Dorsolateral prefrontal cortex (tissue), 120 donors: ENCODE measurements at regions of chr5 and their contacts with region 1.

Region 1: DNA sequence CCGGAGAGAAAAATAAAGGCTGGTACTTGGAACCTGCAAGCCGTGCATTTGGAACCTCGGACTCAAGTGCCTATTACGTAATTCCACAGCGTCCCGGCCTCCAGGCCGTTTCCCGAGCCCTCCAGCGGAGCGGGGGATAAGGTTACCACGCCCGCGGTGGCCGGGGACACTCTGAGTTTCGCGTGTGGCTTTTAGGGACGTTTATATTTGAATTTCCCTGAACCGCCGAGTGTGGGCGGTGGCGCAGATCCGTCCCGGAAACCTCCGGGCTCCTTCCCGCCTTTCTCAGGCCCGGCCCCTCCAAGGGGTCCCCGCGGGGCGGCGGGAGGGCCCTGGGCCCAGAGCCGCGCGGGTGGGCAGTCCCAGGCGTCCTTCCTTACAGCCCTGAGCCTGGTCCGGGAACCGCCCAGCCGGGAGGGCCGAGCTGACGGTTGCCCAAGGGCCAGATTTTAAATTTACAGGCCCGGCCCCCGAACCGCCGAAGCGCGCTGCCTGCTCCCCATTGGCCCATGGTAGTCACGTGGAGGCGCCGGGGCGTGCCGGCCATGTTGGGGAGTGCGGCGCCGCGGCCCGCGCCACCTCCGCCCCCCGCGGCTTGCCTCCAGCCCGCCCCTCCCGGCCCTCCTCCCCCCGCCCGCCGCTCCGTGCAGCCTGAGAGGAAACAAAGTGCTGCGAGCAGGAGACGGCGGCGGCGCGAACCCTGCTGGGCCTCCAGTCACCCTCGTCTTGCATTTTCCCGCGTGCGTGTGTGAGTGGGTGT is at the start of gene LMNB1:
- DNase-seq: peak; percentile 80 to 94 (median 90)
- H3K4me3 ChIP-seq: peak within 1 kb of the TSS; percentile 46 to 96 (median 86)
- H3K27ac ChIP-seq: peak within 1 kb of the TSS; percentile 53 to 96 (median 91)
- H3K27me3 ChIP-seq: no peaks in the 10 kb centered on the region
- CTCF ChIP-seq: peak in 43 of 56 donors; percentile 5 to 61 (median 31)
- total RNA-seq, gene LMNB1: 4.1 to 22.3 (median 8.6) TPM

Region 2: DNA sequence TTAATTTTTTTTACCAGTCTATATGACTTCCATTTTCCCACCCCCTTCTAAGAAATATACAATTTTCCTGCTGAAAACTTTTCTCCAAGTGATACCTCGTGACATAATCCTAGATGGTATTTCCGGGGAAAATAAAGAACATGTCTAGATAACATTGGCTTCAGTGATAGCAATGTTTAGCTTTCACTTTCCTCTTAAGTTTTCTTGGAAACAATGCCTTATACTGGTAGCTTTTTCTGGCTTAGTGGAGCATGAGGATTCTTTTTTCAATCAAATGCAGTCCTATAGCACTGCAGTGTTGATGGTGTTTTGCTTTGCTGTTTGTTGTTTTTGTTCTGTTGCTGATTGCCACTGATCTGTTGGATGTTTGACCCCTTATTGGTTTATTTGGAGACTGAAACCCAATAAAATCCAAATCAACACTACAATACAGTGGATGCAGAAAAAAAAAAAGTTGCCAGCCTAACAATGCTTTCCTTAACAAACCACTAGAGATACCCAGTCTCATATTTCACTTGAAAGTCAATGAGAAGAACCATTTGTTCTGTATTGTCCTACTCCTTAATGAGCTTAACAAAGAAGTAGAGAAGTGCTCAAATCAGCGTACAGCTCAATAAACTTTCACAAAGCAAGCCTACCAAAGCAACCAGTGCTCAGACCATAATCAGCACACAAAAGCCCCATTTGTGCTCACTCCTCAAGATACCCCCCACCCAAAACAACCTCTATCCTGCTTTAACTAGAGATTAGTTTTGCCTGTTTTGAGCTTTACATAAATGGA is 427.6 kb before region 1 on chr5:
- intact Hi-C with region 1: loop called in 1 of 2 experiments (anchors 10 kb)
- DNase-seq: no peak
- H3K4me3 ChIP-seq: no peak overlapping the region
- H3K27ac ChIP-seq: peak overlapping the region in 1 of 59 donors; percentile 13
- H3K27me3 ChIP-seq: no peaks in the 10 kb centered on the region
- CTCF ChIP-seq: no peak

Region 3: GRCh38 chr5:126594676-126595485 is 181.8 kb before region 1 on chr5 and contains the start of gene ALDH7A1:
- intact Hi-C with region 1: loop called (anchors 2 to 5 kb)
- DNase-seq: peak; percentile 73 to 87 (median 84)
- H3K4me3 ChIP-seq: peak within 1 kb of the TSS; percentile 50 to 94 (median 76)
- H3K27ac ChIP-seq: peak within 1 kb of the TSS in 57 of 59 donors; percentile 16 to 93 (median 80)
- H3K27me3 ChIP-seq: no peaks in the 10 kb centered on the region
- CTCF ChIP-seq: peak; percentile 19 to 73 (median 56)
- total RNA-seq, gene ALDH7A1: 54.8 to 188 (median 92.2) TPM

Region 4: GRCh38 chr5:126600631-126601511 is 175.8 kb before region 1 on chr5 and contains the start of gene PHAX:
- intact Hi-C with region 1: loop called (anchors 2 to 5 kb)
- DNase-seq: peak; percentile 57 to 90 (median 72)
- H3K4me3 ChIP-seq: peak within 1 kb of the TSS; percentile 67 to 100 (median 95)
- H3K27ac ChIP-seq: peak within 1 kb of the TSS in 58 of 59 donors; percentile 21 to 95 (median 83)
- H3K27me3 ChIP-seq: no peaks in the 10 kb centered on the region
- CTCF ChIP-seq: peak; percentile 57 to 91 (median 81)
- total RNA-seq, gene PHAX: 32.7 to 78.0 (median 53.0) TPM

Region 5: DNA sequence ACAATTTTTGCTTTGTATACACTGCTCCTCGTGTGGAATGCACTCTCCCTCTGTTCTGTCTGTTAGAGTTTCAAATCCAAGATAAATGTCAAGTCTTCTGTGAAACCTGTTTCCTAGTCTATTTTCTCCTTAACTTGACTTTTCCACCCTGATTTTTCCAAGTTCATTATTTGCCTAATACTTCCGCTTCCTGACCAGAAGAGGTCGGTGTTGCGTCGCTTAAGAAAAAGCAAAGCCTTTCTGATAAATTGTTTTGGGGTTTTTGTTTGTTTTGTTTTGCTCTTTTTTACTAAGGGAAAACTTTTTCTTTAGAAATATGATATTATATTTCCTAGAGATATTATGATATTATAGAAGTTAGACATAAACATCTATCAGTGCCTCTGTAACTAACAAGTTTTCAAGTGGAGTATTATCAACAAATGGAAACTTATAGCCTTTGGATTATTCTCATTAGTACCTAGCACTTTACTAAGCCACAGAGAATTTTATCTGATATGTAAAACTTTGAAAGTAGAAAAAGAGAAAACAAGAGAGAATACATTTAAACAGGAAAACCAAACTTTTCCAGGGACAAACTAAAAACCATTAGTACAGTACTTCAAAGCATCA is 120.2 kb before region 1 on chr5:
- intact Hi-C with region 1: loop called (anchors 1 to 5 kb)
- DNase-seq: peak in 1 of 10 donors; percentile 8
- H3K4me3 ChIP-seq: no peak overlapping the region
- H3K27ac ChIP-seq: no peak overlapping the region
- H3K27me3 ChIP-seq: no peaks in the 10 kb centered on the region
- CTCF ChIP-seq: peak; percentile 61 to 91 (median 80)

Region 6: GRCh38 chr5:126676195-126676624 is 100.5 kb before region 1 on chr5:
- intact Hi-C with region 1: loop called (anchors 1 to 5 kb)
- DNase-seq: peak in 5 of 10 donors; percentile 27 to 65 (median 50)
- H3K4me3 ChIP-seq: no peak overlapping the region
- H3K27ac ChIP-seq: no peak overlapping the region
- H3K27me3 ChIP-seq: peaks cover 0 to 9% (median 0%) of the 10 kb centered on the region in 45 donors
- CTCF ChIP-seq: peak; percentile 51 to 90 (median 82)

Region 7: DNA sequence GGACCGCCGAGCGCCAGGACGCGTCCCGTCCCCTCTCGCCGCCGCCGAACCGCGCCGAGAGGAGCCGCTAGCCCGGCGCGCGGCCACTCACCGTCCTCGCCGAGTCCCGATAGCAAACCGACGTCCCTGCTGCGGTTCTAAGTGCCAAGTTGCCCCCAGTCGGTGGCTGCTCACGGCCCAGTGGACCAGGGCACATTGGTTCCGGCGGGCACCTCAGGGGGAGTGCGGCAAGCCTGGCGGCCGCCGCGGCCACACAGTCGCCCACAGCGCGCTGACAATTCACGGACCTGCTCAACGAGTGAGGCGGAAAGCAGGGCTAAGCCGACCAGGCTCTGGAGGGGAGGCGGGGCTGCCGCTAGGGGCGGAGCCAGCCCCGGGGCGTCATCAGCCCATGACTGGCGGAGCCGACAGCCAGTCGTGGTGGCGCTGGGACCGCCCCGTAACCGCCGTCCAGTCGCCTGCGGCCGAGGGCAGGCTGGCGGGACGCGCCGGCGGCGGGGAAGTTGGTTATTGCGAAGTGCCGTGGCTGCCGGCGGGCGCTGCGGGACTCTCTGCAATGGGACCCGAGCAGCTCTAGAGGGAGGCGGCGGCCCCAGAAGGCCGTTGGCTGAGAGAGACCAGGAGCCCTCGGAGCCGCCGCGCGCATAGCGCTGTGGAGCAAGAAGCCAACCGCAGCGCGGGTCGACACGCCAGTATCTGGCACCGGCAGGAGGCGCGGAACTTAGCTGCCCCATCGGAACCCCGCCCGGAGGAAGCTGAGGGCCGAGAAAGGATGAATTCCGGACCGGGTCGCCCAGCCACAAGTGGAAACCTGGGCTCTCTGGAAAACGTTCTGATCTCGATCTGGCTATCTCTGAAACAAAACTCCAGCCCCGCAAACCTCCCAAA is 253.8 kb after region 1 on chr5 and contains the start of gene MARCHF3:
- intact Hi-C with region 1: loop called in 1 of 2 experiments (anchors 2 kb)
- DNase-seq: peak; percentile 83 to 98 (median 92)
- H3K4me3 ChIP-seq: peak within 1 kb of the TSS; percentile 61 to 92 (median 81)
- H3K27ac ChIP-seq: peak within 1 kb of the TSS in 54 of 59 donors; percentile 37 to 93 (median 81)
- H3K27me3 ChIP-seq: peaks cover 0 to 28% (median 3%) of the 10 kb centered on the region in 45 donors
- CTCF ChIP-seq: peak in 54 of 56 donors; percentile 15 to 79 (median 48)
- total RNA-seq, gene MARCHF3: 1.6 to 35.9 (median 7.6) TPM